ENCODE measurements at regions of chr1 and their contacts with region 1.

Region 1: GRCh38 chr1:43073490-43074230 is 98.4 kb downstream of the EBNA1BP2 start:
- DNase-seq: peak; percentile 57 to 69
- ATAC-seq: peak; percentile 82 to 94 (median 87)
- H3K4me3 ChIP-seq: no peak overlapping the region
- H3K27ac ChIP-seq: no peak overlapping the region
- H3K4me1 ChIP-seq: no peaks in the 10 kb centered on the region
- H3K27me3 ChIP-seq: peaks cover 0 to 5% (median 0%) of the 10 kb centered on the region in 3 donors
- CTCF ChIP-seq: peak; percentile 87

Region 2: DNA sequence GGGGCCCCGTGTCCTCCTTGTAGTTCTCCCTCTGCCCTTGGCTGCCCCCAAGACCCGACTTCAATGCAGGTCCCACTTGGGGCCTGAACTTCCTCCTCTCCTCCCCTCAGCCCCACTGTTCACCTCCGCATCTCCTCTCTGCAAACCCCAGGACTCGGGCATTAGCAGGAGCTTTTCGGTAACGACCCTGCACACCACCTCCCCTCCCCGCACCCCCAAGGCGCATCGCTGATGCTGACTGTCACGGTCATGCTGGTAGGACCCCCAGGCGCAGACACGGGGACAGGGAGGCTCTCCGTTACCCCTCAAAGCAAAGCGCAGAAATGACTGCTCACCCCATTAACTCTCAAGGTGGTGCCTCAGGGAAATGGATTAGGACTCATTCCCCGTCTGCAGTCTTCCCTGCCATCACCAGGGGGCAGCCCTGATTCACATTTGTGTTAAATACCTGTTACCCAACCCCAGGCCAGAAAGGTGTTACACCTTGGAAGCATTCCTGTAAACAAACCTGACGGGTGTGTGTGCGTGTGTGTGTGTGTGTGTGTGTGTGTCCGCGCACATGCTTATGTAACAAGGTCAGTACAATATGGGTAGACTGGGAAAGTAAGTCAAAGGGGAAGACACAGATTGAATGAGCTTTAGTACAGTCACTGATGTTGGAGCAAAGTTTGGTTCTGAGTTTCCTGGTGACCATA is 926.9 kb before region 1 on chr1:
- intact Hi-C with region 1: loop called in 1 of 2 experiments (anchors 10 kb)
- DNase-seq: peak; percentile 49 to 68
- ATAC-seq: peak; percentile 58 to 83 (median 70)
- H3K4me3 ChIP-seq: no peak overlapping the region
- H3K27ac ChIP-seq: no peak overlapping the region
- H3K4me1 ChIP-seq: no peaks in the 10 kb centered on the region
- H3K27me3 ChIP-seq: peaks cover 3 to 66% (median 16%) of the 10 kb centered on the region in 3 donors
- CTCF ChIP-seq: peak; percentile 74

Region 3: DNA sequence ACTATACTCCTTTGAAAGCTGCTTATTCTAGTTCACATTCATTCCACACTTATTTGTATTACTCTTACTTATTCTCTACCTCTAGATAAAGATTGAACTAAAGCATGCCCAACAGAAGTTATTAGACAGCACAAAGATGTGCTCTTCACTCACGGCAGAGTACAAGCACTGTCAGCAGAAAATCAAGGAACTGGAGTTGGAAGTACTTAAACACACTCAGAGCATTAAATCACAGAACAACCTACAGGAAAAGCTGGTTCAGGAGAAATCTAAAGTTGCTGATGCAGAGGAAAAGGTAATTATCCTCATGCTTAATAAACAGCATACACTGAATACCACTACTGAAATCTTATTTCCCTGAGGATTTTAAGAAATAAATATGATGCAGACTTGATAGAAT is 496.7 kb before region 1 on chr1:
- intact Hi-C with region 1: loop called (anchors 5 kb)
- DNase-seq: no peak
- ATAC-seq: no peak
- H3K4me3 ChIP-seq: no peak overlapping the region
- H3K27ac ChIP-seq: no peak overlapping the region
- H3K4me1 ChIP-seq: no peaks in the 10 kb centered on the region
- H3K27me3 ChIP-seq: no peaks in the 10 kb centered on the region
- CTCF ChIP-seq: no peak

Region 4: DNA sequence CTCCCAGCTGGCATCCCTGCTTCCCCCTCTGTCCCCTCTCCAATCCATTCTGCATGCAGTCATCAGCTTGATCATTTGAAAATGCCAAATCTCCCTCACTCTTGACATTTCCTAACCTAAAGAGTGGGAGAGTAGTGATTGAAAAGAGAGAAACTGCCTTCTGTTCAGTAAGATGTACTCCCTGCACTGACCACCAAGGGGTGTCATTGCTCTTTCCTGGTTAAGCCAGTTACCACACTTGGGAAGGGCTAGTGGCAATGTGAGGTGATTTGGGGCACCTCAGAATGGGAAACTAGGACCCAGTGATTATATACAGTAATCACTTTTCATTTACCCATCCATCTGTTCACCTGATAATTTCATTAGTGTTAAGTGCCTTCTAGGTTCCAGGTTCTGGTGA is 295.8 kb before region 1 on chr1:
- intact Hi-C with region 1: loop called (anchors 1 to 5 kb)
- DNase-seq: no peak
- ATAC-seq: peak in 2 of 4 donors; percentile 63 to 71
- H3K4me3 ChIP-seq: no peak overlapping the region
- H3K27ac ChIP-seq: no peak overlapping the region
- H3K4me1 ChIP-seq: no peaks in the 10 kb centered on the region
- H3K27me3 ChIP-seq: no peaks in the 10 kb centered on the region
- CTCF ChIP-seq: peak; percentile 59

Region 5: GRCh38 chr1:42913426-42914091 is 160.1 kb before region 1 on chr1:
- intact Hi-C with region 1: loop called (anchors 2 to 5 kb)
- DNase-seq: no peak
- ATAC-seq: peak in 3 of 4 donors; percentile 54 to 74 (median 69)
- H3K4me3 ChIP-seq: no peak overlapping the region
- H3K27ac ChIP-seq: no peak overlapping the region
- H3K4me1 ChIP-seq: no peaks in the 10 kb centered on the region
- H3K27me3 ChIP-seq: no peaks in the 10 kb centered on the region
- CTCF ChIP-seq: peak; percentile 70

Region 6: DNA sequence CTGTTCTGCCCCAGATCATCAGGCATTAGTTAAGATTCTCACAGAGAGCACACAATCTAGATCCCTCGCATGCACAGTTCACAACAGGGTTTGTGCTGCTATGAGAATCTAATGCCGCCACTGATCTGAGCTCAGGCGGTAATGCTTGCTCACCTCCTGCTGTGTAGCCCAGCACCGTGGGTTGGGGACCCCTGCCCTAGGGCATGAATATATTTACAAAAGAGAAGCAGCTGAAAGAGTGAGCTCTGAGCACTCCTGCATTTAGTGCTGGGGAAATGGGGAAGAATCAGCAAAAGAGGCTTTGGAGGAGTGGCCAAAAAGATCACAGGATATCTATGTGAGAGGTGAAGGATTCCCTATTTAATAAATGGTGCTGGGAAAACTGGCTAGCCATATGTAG is 104.0 kb after region 1 on chr1:
- intact Hi-C with region 1: no loop called
- DNase-seq: no peak
- ATAC-seq: no peak
- H3K4me3 ChIP-seq: no peak overlapping the region
- H3K27ac ChIP-seq: no peak overlapping the region
- H3K4me1 ChIP-seq: no peaks in the 10 kb centered on the region
- H3K27me3 ChIP-seq: peaks cover 0 to 16% (median 0%) of the 10 kb centered on the region in 3 donors
- CTCF ChIP-seq: no peak